Heart left ventricle (tissue), 16 donors: ENCODE measurements at regions of chr3 and their contacts with region 1.

Region 1: GRCh38 chr3:196739671-196740480 is at the start of gene PAK2:
- DNase-seq: peak; percentile 94 to 97 (median 95)
- ATAC-seq: peak; percentile 96 to 98 (median 98)
- H3K4me3 ChIP-seq: peak within 1 kb of the TSS; percentile 64 to 99 (median 90)
- H3K27ac ChIP-seq: peak within 1 kb of the TSS; percentile 90 to 99 (median 96)
- H3K4me1 ChIP-seq: peaks cover 0 to 44% (median 18%) of the 10 kb centered on the region in 12 donors
- H3K27me3 ChIP-seq: no peaks in the 10 kb centered on the region
- CTCF ChIP-seq: peak in 4 of 12 donors; percentile 6 to 41 (median 14)
- POLR2A ChIP-seq: peak in 1 of 2 donors; percentile 36
- total RNA-seq, gene PAK2: 39.2 to 67.8 (median 52.9) TPM

Region 2: GRCh38 chr3:196585044-196585757 is 154.7 kb before region 1 on chr3:
- intact Hi-C with region 1: no loop called
- DNase-seq: no peak
- ATAC-seq: no peak
- H3K4me3 ChIP-seq: no peak overlapping the region
- H3K27ac ChIP-seq: no peak overlapping the region
- H3K4me1 ChIP-seq: no peaks in the 10 kb centered on the region
- H3K27me3 ChIP-seq: no peaks in the 10 kb centered on the region
- CTCF ChIP-seq: no peak
- POLR2A ChIP-seq: no peak

Region 3: GRCh38 chr3:196711838-196712513 is 27.9 kb before region 1 on chr3 and contains the starts of genes CEP19 and PIGX:
- intact Hi-C with region 1: loop called in 3 of 10 experiments (anchors 2 kb)
- DNase-seq: peak; percentile 87 to 94 (median 88)
- ATAC-seq: peak; percentile 95 to 98 (median 98)
- H3K4me3 ChIP-seq: peak within 1 kb of the TSS; percentile 57 to 98 (median 90)
- H3K27ac ChIP-seq: peak within 1 kb of the TSS; percentile 69 to 95 (median 90)
- H3K4me1 ChIP-seq: peaks cover 0 to 23% (median 13%) of the 10 kb centered on the region in 12 donors
- H3K27me3 ChIP-seq: no peaks in the 10 kb centered on the region
- CTCF ChIP-seq: peak in 4 of 12 donors; percentile 6 to 26 (median 23)
- POLR2A ChIP-seq: peak in 1 of 2 donors; percentile 88
- total RNA-seq, gene CEP19: 0.81 to 2.8 (median 1.4) TPM
- total RNA-seq, gene PIGX: 16.6 to 21.2 (median 18.8) TPM

Region 4: GRCh38 chr3:196867507-196868296 is 127.8 kb after region 1 on chr3 and contains the start of gene SENP5:
- intact Hi-C with region 1: loop called in 1 of 10 experiments (anchors 5 kb)
- DNase-seq: peak; percentile 91 to 96 (median 94)
- ATAC-seq: peak; percentile 95 to 99 (median 99)
- H3K4me3 ChIP-seq: peak within 1 kb of the TSS; percentile 63 to 99 (median 97)
- H3K27ac ChIP-seq: peak within 1 kb of the TSS; percentile 18 to 97 (median 94)
- H3K4me1 ChIP-seq: peaks cover 0 to 34% (median 21%) of the 10 kb centered on the region in 12 donors
- H3K27me3 ChIP-seq: no peaks in the 10 kb centered on the region
- CTCF ChIP-seq: no peak
- POLR2A ChIP-seq: peak in 1 of 2 donors; percentile 94
- total RNA-seq, gene SENP5: 16.8 to 28.5 (median 22.9) TPM

Region 5: DNA sequence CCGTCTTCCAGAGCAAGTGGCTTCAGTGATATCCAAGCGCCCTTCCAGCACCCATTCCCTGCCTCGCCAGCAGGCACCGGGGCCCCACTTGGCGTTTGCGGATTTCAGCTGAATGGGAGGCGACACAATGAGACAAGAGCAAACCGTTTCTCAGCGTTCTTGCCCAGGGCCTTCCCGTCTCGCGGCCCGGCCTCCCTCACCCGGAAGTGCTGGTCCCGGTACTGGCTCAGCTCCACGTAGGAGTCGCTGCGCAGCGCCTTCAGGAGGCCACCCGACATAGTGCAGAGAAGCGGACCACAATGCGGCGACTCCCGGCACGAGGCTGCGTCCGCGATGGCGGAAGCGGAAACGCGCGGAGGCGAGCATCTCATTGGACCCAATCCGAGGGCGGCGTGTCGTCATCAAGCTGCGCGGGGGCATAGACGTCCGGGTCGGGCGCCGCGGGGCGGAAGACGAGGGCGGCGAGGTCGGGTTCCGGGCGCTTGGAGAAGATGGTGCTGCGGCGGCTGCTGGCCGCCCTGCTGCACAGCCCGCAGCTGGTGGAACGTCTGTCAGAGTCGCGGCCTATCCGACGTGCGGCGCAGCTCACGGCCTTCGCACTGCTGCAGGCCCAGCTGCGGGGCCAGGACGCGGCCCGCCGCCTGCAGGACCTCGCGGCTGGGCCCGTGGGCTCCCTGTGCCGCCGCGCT is 202.5 kb after region 1 on chr3 and contains the start of gene NCBP2:
- intact Hi-C with region 1: loop called in 1 of 10 experiments (anchors 10 kb)
- DNase-seq: peak; percentile 99 to 100 (median 99)
- ATAC-seq: peak; percentile 96 to 98 (median 96)
- H3K4me3 ChIP-seq: peak within 1 kb of the TSS; percentile 70 to 100 (median 96)
- H3K27ac ChIP-seq: peak within 1 kb of the TSS; percentile 63 to 98 (median 91)
- H3K4me1 ChIP-seq: peaks cover 4 to 38% (median 22%) of the 10 kb centered on the region in 12 donors
- H3K27me3 ChIP-seq: no peaks in the 10 kb centered on the region
- CTCF ChIP-seq: peak; percentile 26 to 76 (median 60)
- POLR2A ChIP-seq: peak; percentile 52 to 83
- total RNA-seq, gene NCBP2: 20.7 to 43.8 (median 38.9) TPM

Region 6: DNA sequence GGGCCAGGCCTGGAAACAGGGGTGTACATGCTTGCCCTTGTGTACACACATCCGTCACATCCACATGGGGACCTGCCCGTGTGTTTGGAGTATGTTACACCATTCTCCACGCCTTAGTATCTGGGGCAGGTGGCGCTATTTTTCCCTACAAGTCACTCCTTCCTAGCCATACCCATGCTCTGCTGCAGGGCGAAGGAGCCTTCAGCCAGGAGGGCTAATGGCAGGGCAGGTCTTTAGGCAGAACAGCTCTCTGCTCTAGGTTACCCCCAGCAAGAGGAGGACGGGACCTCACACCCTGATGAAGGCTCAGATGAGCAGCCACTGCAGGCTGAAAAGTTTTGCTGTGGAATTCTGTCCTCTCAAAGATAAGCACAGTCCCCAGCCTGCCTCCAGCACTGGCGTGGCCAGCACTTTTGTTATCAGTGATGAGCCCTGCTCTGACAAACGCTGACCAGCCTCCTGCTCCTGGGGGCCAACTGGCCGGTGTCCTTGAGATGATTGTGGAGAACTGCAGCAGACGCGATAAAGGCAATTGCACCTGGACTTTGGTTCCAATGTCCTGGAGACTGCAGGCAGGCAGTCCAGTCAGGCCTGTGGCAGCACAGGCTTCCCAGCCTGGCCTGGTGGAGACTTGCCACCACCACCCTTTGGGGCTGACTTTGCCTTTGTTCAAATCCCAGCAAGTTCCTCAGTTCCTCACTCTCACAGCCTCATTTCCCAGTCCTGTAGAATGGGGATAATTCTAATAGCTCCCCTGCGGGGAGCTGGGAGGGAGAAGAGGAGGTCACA is 248.6 kb after region 1 on chr3:
- intact Hi-C with region 1: no loop called
- DNase-seq: peak in 3 of 5 donors; percentile 22 to 56 (median 31)
- ATAC-seq: peak in 3 of 4 donors; percentile 43 to 71 (median 67)
- H3K4me3 ChIP-seq: no peak overlapping the region
- H3K27ac ChIP-seq: no peak overlapping the region
- H3K4me1 ChIP-seq: peaks cover 0 to 10% (median 6%) of the 10 kb centered on the region in 12 donors
- H3K27me3 ChIP-seq: peaks cover 0 to 9% (median 0%) of the 10 kb centered on the region in 9 donors
- CTCF ChIP-seq: no peak
- POLR2A ChIP-seq: no peak